Posterior vena cava (tissue), 2 donors: ENCODE measurements at regions of chr15 and their contacts with region 1.

Region 1: DNA sequence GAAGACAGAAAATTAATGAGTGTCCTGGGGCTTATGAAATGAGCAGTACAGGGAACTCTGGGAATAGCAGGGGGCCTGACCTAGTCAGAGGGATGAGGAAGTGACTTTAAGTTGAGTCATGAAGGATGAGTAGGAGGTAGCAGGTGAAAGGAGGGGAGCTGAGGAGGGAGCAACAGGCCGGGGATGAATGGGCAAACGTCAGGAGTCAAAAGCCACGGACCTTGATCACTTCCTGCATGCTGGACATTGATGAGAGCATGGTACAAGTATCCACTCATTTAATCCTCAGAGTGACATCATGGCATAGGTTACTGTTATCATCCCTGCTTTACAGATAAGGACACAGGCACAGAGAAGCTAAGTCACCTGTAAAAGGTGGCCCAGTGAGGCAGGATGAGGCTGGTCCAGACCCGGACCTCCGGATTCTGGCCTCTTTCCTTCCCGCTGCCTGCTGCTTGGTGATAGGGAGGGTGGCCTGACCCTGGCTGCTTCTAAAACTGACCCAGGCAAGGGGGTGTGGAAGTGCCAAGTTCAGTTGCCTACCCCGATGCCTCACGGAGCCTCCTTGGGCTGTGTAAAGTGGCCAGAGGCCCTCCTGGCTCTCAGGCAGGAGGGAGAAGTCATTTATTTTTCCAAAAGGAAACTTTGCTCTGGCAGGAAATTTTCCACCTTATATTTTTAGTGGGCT is 7.6 kb downstream of the CORO2B start:
- DNase-seq: peak; percentile 59

Region 2: DNA sequence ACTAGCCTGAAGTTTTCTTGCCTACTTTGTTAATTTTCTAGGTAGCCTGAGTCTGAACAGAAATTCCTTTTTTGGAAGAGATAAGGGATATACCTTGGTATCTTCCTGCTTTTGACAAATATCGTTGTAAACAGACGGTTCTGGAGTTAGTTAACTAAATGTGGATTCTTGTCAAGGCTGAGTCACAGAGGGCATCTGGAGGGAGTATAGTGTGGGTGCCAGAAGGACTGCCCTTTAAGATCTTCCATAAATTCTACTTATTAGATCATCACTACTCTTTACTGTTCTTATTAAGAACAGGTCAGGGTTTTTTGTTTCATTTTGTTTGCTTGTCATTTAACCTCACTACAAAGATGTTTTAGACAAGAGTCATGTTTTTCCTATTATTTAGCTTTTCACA is 886.4 kb before region 1 on chr15:
- intact Hi-C with region 1: loop called in 1 of 2 experiments (anchors 5 kb)
- DNase-seq: no peak